ENCODE measurements at regions of chr18 and their contacts with region 1.

Region 1: DNA sequence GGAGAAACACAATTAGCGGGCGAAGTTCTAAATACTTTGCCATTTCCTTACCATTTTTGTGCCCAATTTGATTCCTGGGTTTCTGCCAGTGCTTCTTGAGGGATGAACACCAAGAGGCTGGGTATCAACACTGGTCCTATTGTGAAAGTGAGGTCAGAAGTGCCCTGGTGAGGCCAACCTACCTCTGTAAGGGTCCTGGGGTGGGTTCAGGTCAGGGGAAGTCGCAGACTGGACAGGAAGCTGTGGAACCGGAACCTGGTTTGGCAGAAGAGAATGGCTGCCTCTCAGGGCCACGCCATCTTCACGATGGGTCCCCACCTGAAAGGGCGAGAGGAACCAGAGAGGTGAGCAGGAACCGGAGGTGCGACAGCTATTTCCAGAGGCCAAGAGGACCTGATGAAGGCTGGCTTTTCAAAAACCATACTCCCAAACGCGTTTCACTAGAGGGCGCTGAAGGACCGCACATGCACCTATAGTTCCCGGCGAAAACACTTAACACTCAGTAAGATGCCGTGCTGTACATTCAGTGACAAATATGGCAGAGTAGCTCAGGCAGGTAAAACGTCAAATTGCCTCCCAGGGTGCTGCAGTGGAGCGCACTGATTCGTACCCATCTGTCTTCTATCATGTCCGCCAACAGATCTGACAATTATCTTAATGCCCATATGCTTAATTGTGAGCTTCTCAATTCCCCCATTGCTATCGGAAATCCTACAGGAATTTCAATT is 275.3 kb upstream of the CCDC68 start:
- DNase-seq: peak; percentile 69
- H3K4me3 Mint-ChIP-seq: no peak overlapping the region
- H3K27ac Mint-ChIP-seq: no peak overlapping the region
- H3K4me1 Mint-ChIP-seq: no peaks in the 10 kb centered on the region
- H3K27me3 Mint-ChIP-seq: no peaks in the 10 kb centered on the region

Region 2: DNA sequence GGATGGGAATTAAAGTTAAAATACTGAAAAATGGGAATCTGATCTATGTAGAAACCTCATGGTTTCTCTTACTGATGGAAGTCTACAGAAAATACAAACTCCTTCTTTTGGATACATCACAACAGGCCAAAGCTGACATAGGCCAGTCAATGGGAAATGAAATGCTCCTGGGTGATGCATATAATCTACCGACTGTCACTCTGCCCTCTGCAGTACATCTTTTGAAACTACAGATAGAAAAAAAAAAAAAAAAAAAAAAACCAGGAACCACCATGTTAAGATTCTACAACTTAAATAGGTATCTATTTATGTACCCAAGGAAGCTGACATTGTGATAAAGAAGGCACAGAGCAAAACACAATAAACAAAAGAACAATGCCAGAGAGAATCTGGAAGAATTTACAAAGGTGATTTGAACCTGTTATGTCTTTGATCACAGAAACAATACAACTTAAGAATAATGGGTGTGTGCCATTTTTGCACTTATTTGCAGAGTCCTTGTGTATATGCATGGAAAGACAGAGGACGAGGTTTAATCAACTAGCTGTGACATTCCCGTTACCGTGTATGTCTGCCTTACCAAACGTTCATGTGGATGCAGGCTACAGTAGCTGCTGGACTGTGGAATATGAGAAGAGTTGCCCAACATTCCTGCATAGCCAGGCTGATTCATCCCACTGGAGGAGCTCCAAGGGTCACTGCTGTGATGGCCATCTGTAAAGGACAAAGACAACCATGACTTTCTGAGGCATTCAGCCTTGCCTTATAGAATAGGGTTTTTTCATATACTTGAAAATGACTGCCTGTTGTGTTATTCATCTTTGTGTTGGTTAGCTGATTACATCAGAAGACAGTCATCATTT is 40.7 kb after region 1 on chr18:
- CTCF ChIA-PET with region 1: interaction called, 12 read pairs
- POLR2A ChIA-PET with region 1: no interaction called
- intact Hi-C with region 1: loop called (anchors 1 kb)
- DNase-seq: no peak
- H3K4me3 Mint-ChIP-seq: no peak overlapping the region
- H3K27ac Mint-ChIP-seq: no peak overlapping the region
- H3K4me1 Mint-ChIP-seq: no peaks in the 10 kb centered on the region
- H3K27me3 Mint-ChIP-seq: no peaks in the 10 kb centered on the region

Measured in activated CD4-positive, alpha-beta memory T cell treated with anti-CD3 and anti-CD28 coated beads for 36 hours (primary cell).